AG04449 (cell line): ENCODE measurements at regions of chr6 and their contacts with region 1.

Region 1: DNA sequence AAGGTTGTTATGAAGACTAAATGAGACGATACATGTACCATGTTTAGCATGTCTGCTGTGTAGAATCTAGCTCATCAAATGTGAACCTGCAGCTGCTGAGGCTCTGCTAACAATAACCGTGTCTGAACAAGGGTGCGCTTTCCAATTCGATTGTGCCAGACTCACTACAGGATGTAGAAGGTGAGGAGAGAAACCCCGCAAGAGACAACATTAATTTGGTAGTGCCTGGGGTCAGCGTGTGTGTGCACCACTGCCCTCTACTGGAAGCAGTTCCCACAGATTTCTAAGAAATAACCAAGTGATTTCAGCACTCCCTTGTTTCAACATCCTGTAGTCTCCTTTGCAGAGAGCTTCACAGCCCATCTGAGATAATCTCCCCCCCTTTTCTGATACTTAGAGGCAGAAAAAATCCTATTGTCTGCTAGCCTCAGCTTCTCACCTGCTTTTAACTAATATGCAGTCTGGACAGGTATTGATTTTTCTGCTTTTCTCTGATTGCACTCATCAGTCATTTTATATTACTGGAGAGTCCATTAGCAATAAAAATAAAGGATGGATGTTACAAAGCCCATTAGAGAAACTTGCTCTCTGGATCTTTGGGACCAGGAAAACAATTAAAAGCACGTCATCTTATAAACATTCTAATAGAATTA is 96.7 kb upstream of the BACH2 start:
- DNase-seq: no peak
- H3K4me3 ChIP-seq: no peak overlapping the region
- CTCF ChIP-seq: peak; percentile 72

Region 2: GRCh38 chr6:89564752-89565427 is 828.5 kb before region 1 on chr6:
- CTCF ChIA-PET with region 1: no interaction called
- POLR2A ChIA-PET with region 1: no interaction called
- DNase-seq: no peak
- H3K4me3 ChIP-seq: no peak overlapping the region
- CTCF ChIP-seq: no peak

Region 3: GRCh38 chr6:89940225-89941027 is 452.9 kb before region 1 on chr6:
- CTCF ChIA-PET with region 1: interaction called, 63 read pairs
- POLR2A ChIA-PET with region 1: no interaction called
- DNase-seq: peak; percentile 54
- H3K4me3 ChIP-seq: no peak overlapping the region
- CTCF ChIP-seq: peak; percentile 78

Region 4: GRCh38 chr6:89977808-89978748 is 415.3 kb before region 1 on chr6:
- CTCF ChIA-PET with region 1: interaction called, 27 read pairs
- POLR2A ChIA-PET with region 1: no interaction called
- DNase-seq: peak; percentile 70
- H3K4me3 ChIP-seq: no peak overlapping the region; the same call in 1 of the 2 replicates
- CTCF ChIP-seq: no peak

Region 5: DNA sequence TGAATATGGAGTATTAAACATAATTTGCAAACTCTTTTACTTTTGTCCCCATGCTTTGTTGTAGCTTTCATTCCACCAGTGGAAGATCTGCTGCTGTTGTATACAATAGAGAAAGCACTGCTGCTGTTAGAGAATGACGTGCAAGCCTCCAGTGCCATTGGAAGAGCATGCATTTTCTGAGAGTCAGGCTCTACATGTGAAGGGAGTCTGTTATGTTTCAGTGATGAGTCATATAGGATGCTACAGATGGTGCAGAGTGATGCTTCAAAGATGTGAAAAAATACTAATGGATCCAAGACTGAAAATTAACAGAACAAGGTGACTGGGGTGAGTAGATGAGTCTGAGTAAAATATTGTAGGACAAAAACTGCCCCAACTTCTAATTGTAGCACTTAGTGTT is 74.3 kb before region 1 on chr6:
- CTCF ChIA-PET with region 1: interaction called, 10 read pairs
- POLR2A ChIA-PET with region 1: no interaction called
- DNase-seq: peak; percentile 3
- H3K4me3 ChIP-seq: no peak overlapping the region
- CTCF ChIP-seq: no peak

Region 6: GRCh38 chr6:90383196-90383822 is 10.0 kb before region 1 on chr6:
- CTCF ChIA-PET with region 1: interaction called, 37 read pairs
- POLR2A ChIA-PET with region 1: no interaction called
- DNase-seq: no peak
- H3K4me3 ChIP-seq: no peak overlapping the region
- CTCF ChIP-seq: no peak

Region 7: DNA sequence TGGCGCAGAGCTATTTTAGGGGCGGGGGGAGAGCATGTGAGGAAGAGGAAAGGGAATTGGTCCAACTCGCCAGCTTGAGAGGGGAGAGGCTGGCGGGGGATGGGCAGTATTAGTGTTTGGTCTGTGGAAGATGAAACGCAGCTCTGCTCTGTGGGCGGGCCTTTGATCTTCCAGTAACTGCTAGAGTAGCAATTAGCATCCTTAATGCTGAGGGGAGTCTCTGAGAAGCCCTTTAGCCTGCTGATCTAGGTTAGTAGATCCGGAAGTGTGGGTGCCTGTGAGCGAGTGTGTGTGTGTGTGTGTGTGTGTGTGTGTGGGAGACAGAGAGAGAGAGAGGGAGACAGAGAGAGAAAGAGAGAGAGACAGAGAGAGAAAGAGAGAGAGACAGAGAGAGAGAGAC is 20.5 kb after region 1 on chr6:
- CTCF ChIA-PET with region 1: interaction called, 28 read pairs
- POLR2A ChIA-PET with region 1: no interaction called
- DNase-seq: no peak
- H3K4me3 ChIP-seq: peak overlapping the region; percentile 16; the same call in 1 of the 2 replicates
- CTCF ChIP-seq: no peak

Region 8: DNA sequence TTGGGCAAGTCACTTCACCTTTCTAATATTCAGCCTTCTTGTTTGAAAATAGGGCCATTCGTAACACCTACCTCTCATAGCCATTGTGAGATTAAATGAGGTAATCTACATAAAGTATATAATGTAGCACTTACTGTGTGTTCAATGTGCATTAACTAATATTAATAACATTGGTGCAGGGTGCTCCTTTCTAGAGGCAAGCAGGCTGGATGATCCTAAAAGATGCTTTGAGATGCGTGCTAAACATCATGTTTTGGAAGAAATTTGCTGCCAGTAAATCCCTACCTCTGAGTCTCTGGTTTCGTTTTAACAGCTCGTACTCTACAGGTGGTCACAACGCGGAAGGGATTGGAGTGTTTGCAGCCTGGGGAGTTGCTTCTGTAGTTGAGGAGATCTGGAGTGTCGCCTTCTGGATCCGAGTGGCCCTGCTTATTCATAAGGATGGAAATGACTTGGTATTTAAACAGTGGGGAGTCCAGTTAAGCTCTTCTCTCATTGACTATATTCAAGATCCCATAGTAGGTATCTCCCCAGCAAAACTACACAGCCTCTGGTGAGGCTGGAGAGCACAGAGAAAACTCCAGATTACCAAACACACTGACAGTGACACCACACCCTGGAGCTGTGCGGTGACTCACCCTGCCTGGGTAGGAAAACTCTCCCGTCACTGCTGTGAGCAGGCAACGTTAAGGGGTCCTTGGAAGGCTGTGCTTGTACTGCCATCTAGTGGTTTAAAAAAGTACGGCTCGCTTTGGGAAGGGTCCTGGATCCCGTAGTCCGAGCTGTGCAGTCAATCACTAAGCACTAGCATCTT is 85.6 kb after region 1 on chr6:
- CTCF ChIA-PET with region 1: interaction called, 12 read pairs
- POLR2A ChIA-PET with region 1: no interaction called
- DNase-seq: peak; percentile 65
- H3K4me3 ChIP-seq: no peak overlapping the region
- CTCF ChIP-seq: peak; percentile 71

Region 9: GRCh38 chr6:90574610-90575009 is 181.3 kb after region 1 on chr6:
- CTCF ChIA-PET with region 1: no interaction called
- POLR2A ChIA-PET with region 1: no interaction called
- DNase-seq: peak; percentile 24
- H3K4me3 ChIP-seq: no peak overlapping the region
- CTCF ChIP-seq: no peak